Naive thymus-derived CD4-positive, alpha-beta T cell (primary cell): ENCODE measurements at regions of chr2 and their contacts with region 1.

Region 1: DNA sequence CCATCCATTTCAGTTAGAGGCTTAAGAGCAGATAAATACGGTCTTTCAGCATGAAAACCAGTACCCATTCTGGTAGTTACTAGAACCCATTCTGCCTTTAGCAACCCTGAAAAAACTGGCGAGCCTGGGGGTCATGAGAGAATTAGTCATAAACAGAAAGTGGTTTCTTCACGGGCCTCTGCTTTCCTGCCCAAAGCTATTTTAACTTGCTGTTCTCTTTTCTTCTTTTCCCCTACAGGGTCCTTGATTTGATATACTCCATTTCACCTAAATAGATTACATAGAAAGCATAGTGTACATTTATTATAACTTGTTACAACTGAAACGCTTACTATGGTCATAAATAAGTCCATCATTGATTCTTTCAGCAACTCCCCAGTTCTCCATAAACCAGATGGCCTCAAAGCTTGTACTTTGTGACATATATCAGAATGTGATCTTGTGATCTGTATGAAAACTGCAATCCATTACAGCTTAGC is 48.3 kb downstream of the WDFY1 start:
- DNase-seq: no peak
- ATAC-seq: peak; percentile 48
- H3K4me3 ChIP-seq: no peak overlapping the region
- H3K4me3 Mint-ChIP-seq: peak overlapping the region in 1 of 10 donors; percentile 16
- H3K27ac ChIP-seq: no peak overlapping the region
- H3K27ac Mint-ChIP-seq: peak overlapping the region in 1 of 9 donors; percentile 58
- H3K4me1 ChIP-seq: no peaks in the 10 kb centered on the region
- H3K4me1 Mint-ChIP-seq: peaks cover 0 to 22% (median 0%) of the 10 kb centered on the region in 7 donors
- H3K27me3 ChIP-seq: no peaks in the 10 kb centered on the region
- H3K27me3 Mint-ChIP-seq: no peaks in the 10 kb centered on the region

Region 2: GRCh38 chr2:222943789-222944188 is 953.1 kb before region 1 on chr2:
- CTCF ChIA-PET with region 1: no interaction called
- POLR2A ChIA-PET with region 1: no interaction called
- intact Hi-C with region 1: no loop called
- DNase-seq: no peak
- ATAC-seq: no peak
- H3K4me3 ChIP-seq: no peak overlapping the region
- H3K4me3 Mint-ChIP-seq: no peak overlapping the region
- H3K27ac ChIP-seq: no peak overlapping the region
- H3K27ac Mint-ChIP-seq: no peak overlapping the region
- H3K4me1 ChIP-seq: no peaks in the 10 kb centered on the region
- H3K4me1 Mint-ChIP-seq: peaks cover 0 to 6% (median 0%) of the 10 kb centered on the region in 7 donors
- H3K27me3 ChIP-seq: no peaks in the 10 kb centered on the region
- H3K27me3 Mint-ChIP-seq: peaks cover 0 to 2% (median 0%) of the 10 kb centered on the region in 5 donors

Region 3: DNA sequence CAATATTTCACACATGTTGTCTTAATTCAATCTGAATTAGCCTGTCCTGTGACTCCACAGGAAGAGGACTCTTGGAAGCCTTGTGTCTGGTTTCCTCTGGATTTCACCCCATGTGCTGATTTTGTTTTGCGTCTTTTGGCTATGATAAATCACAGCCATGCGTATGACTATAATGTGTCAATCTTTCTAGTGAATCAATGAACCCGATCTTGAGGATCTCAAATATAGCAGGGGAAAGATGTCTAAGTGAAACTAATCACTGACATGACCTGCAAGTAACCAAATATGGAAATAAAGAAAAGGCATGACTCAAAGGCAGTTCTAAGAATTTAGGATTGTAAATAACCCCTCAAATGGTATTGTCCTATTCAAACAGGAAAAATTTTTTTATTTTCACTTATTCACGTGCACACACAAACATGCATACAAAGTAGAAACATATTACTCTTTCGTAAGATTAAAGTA is 40.0 kb after region 1 on chr2:
- CTCF ChIA-PET with region 1: no interaction called
- POLR2A ChIA-PET with region 1: interaction called, 5 read pairs
- intact Hi-C with region 1: loop called in 1 of 2 experiments (anchors 2 kb)
- DNase-seq: no peak
- ATAC-seq: no peak
- H3K4me3 ChIP-seq: no peak overlapping the region
- H3K4me3 Mint-ChIP-seq: peak overlapping the region in 1 of 10 donors; percentile 62
- H3K27ac ChIP-seq: no peak overlapping the region
- H3K27ac Mint-ChIP-seq: peak overlapping the region in 2 of 9 donors; percentile 22 to 70
- H3K4me1 ChIP-seq: peaks cover 12 to 24% of the 10 kb centered on the region in 2 donors
- H3K4me1 Mint-ChIP-seq: peaks cover 18 to 78% (median 71%) of the 10 kb centered on the region in 7 donors
- H3K27me3 ChIP-seq: no peaks in the 10 kb centered on the region
- H3K27me3 Mint-ChIP-seq: no peaks in the 10 kb centered on the region